ENCODE measurements at regions of chr2 and their contacts with region 1.

Region 1: DNA sequence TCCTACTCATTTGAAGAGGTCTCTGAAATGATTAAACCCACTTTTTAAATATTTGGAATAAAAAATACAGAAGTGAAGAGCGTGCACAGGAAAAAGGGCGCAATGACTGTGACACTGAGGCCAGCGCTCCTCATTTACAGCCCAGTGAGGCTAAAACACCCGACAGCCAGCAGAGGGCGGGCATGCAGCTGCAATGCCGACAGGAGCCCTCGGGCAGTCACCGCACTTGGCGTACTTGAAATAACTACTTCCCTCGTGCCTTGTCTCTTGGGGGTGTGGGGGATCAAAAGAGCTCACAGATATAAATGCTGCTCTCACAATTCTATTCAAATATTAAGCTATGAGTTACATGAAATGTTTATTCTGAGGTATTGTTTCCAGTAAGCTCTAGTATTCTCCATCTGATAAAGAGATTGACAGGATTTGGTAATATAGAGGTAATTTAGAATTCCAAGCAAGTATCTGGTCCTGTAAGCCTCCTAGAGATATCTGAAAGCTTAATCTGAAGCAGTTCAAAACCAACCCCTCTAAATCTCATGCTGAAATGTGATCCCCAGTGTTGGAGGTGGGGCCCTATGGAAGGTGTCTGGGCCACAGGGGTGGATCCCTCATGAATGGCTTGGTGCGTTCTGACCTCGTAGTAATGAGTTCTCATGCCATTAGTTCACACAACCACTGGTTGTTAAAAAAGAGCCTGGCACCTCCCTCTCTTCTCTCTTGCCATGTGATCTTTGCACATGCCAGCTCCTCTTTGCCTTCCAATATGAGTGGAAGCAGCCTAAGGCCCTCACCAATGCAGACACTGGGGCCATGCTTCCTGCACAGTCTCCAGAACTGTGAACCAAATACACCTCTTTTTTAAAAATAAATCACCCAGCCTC is 93.6 kb downstream of the ZAP70 start:
- DNase-seq: peak; percentile 74 to 92 (median 84)
- H3K4me3 ChIP-seq: no peak overlapping the region
- H3K27ac ChIP-seq: no peak overlapping the region
- H3K4me1 ChIP-seq: no peaks in the 10 kb centered on the region
- H3K27me3 ChIP-seq: no peaks in the 10 kb centered on the region
- CTCF ChIP-seq: peak; percentile 96

Region 2: DNA sequence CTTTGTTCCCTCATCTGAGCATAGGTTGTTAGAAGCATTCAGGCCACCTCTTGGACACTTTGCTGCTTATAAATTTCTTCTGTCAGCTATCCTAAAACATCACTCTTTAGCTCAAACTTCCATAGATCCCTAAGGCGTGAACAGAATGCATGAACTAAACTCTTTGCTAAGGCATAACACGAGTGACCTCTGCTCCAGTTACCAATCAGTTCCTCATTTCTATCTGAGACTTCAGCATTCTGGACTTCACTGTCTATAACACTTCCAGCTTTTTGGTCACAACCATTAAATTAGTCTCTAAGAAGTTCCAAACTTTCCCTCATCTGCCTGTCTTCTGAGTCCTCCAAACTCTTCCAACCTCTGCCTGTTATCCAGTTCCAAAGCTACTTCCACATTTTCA is 271.7 kb after region 1 on chr2:
- intact Hi-C with region 1: no loop called
- DNase-seq: no peak
- H3K4me3 ChIP-seq: no peak overlapping the region
- H3K27ac ChIP-seq: no peak overlapping the region
- H3K4me1 ChIP-seq: no peaks in the 10 kb centered on the region
- H3K27me3 ChIP-seq: no peaks in the 10 kb centered on the region
- CTCF ChIP-seq: no peak

Region 3: DNA sequence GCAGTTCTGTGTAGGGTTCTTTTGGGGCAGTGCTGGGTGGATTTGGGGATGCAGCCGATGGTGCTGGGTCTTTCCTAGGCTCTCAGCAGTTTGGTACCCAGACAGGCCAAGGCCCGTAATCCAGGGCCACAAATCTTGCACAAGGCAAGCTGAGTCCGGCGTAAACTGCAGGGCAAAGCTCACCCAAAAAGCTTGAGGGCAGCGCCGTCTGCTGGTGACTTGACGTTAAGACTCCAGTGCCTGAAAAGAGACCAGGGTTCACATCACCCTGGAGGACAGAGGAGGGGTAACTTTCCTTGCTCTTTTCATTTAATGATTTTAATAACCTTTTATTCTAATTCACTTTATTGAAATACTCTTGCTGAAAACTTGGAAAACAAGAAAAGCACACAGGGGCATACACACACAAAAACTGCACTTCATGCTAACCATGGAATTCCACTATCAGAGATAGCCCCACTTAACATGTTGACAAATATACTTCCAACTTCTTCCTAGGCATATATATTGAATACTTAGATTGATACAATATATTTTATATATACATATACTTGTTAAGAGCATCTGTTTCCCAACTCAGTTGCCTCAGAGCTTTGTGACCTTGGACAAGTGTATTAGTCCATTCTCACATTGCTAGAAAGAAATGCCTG is 578.2 kb after region 1 on chr2:
- intact Hi-C with region 1: loop called (anchors 10 kb)
- DNase-seq: peak; percentile 75 to 89 (median 82)
- H3K4me3 ChIP-seq: no peak overlapping the region
- H3K27ac ChIP-seq: no peak overlapping the region
- H3K4me1 ChIP-seq: no peaks in the 10 kb centered on the region
- H3K27me3 ChIP-seq: no peaks in the 10 kb centered on the region
- CTCF ChIP-seq: peak; percentile 99

Measured in kidney (tissue), 22 donors.